Activated CD4-positive, alpha-beta T cell treated with anti-CD3 and anti-CD28 coated beads, Interleukin-2, amount 10 ng/mL, durations not matched to agents 24 days and 14 days (primary cell): ENCODE measurements at regions of chr9 and their contacts with region 1.

Region 1: GRCh38 chr9:99140685-99141314 is 35.9 kb downstream of the TGFBR1 start:
- DNase-seq: peak; percentile 81
- H3K4me3 Mint-ChIP-seq: no peak overlapping the region
- H3K27ac Mint-ChIP-seq: no peak overlapping the region
- H3K4me1 Mint-ChIP-seq: peaks cover 41% of the 10 kb centered on the region
- H3K27me3 Mint-ChIP-seq: no peaks in the 10 kb centered on the region

Region 2: DNA sequence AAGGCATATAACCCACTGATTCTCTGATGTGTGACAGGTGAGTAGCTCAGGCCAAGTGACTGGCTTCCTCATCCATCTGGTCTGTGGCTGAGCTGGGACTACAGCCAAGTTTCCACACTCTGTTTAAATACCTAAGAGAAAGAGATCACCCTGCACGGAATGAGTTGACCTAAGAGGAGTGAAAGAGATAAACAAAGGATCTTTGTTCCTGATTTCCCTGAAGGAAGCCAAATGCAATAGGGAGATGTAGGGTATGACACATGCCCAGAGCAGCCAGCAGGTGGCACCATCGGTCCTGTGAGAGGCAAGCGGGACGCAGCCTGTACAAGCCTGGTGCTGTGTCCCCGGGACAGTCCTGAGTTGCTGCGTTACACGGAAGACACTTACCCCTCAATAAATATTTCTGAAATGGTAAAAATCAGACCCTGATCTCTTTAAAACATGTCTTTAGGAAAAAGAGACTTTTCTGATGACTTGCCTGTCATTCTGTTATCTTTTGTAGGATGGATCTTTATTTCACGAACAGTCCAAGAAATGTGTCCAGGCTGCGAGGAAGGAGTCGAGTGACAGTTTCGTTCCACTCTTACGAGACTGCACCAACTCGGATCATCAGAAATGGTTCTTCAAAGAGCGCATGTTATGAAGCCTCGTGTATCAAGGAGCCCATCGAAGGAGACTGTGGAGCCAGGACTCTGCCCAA is 292.2 kb before region 1 on chr9:
- intact Hi-C with region 1: loop called (anchors 10 kb)
- DNase-seq: peak; percentile 92
- H3K4me3 Mint-ChIP-seq: no peak overlapping the region
- H3K27ac Mint-ChIP-seq: no peak overlapping the region
- H3K4me1 Mint-ChIP-seq: peaks cover 15% of the 10 kb centered on the region
- H3K27me3 Mint-ChIP-seq: no peaks in the 10 kb centered on the region

Region 3: DNA sequence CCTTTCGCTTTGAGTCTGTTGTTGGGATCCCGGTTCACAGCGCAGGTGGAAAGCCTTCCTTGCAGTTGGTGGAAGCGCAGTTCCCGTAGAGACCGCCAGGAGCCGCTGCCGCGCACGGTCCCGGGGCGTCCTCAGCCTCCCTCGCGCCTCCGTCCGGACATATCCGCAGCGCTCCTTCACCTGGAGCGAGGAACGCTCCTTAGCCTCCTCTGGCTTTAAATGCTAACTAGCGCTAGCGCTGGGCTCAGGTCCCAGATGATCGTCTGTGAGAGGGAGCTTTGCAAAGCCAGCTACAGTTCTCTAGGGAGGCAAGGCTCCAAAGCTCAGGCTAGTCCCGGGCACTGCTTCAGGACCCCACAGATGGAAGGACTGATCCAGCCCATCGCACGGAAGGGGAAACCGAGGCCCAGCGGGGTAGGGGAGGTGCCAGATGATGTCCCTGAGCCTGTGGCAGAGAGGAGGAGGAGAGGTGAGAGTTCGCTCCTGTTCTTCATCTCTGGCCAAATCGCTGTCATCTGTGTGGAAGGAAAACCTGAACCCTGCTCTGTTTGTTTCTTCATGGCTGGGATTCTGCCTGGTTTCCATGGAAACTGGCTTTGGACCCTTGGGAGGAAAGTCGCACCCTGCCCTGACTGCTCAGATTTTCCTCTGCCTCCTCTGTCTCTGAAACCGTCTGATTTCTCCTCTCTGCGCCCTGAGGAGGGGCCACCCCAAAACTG is 165.6 kb before region 1 on chr9:
- intact Hi-C with region 1: loop called (anchors 1 kb)
- DNase-seq: peak; percentile 95
- H3K4me3 Mint-ChIP-seq: peak overlapping the region; percentile 58
- H3K27ac Mint-ChIP-seq: no peak overlapping the region
- H3K4me1 Mint-ChIP-seq: peaks cover 10% of the 10 kb centered on the region
- H3K27me3 Mint-ChIP-seq: peaks cover 38% of the 10 kb centered on the region

Region 4: DNA sequence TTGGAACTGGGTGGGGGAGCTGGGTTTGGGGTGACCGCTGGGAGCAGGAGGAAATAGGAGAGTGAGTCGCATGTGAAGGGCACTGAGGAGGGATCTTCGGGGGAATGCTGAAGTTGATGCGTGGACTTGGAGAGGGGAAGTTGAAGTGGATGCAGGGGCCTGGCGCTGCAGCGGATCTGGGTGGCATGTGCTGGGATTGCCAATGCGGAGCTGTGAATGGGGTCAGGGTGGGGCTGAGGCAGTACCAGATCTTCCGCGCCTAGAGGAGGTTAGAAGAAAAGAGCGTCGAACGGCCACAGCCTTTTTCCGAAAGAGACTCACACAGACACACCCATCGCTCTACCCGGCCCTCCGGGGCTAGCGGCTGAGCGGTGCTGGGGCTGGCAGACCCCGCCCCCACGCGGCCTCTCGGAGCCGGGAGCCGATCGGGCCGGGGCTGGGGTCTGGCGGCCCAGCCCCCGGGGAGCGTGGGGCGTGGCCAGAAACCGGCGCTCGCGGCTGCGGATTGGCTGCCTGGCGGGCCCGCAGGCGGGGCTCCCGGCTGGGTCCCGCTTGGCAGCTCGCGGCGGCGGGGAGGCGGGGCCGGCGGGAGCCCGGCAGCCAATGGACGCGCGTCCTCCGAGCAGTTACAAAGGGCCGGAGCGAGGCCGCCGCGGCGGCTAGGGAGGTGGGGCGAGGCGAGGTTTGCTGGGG is 36.2 kb before region 1 on chr9 and contains the start of gene TGFBR1:
- intact Hi-C with region 1: loop called (anchors 5 kb)
- DNase-seq: peak; percentile 99
- H3K4me3 Mint-ChIP-seq: peak within 1 kb of the TSS; percentile 90
- H3K27ac Mint-ChIP-seq: peak within 1 kb of the TSS; percentile 84
- H3K4me1 Mint-ChIP-seq: peaks cover 53% of the 10 kb centered on the region
- H3K27me3 Mint-ChIP-seq: no peaks in the 10 kb centered on the region
- total RNA-seq, gene TGFBR1: 29.7 and 35.3 TPM in 2 replicates

Region 5: GRCh38 chr9:99127376-99128132 is 13.2 kb before region 1 on chr9:
- intact Hi-C with region 1: loop called (anchors 2 kb)
- DNase-seq: no peak
- H3K4me3 Mint-ChIP-seq: no peak overlapping the region
- H3K27ac Mint-ChIP-seq: peak overlapping the region; percentile 22
- H3K4me1 Mint-ChIP-seq: peaks cover 56% of the 10 kb centered on the region
- H3K27me3 Mint-ChIP-seq: no peaks in the 10 kb centered on the region